Right ventricle myocardium superior (tissue), 1 donor: ENCODE measurements at regions of chr7 and their contacts with region 1.

Region 1: DNA sequence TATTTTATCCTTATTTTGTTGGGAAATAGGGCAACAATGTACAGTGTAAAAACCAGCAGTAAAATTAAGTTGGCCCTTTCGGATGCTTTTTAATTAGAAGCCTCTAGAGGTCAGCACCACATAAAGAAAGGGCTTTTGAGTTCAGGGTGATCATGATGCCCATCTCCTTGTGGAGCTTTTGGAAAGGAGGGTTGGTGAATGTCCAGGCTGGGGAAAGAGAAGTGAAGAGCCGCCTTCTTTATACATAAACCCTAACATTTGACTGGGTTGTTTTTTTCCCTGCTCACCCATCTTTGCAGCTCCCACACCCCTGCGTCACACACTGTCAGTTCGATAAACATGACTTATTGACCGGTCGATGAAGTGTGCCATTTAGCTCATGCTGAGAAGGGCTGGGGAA is 29.8 kb downstream of the MTURN start:
- DNase-seq: no peak
- ATAC-seq: peak; percentile 75

Region 2: GRCh38 chr7:30412810-30413504 is 248.4 kb after region 1 on chr7:
- intact Hi-C with region 1: loop called (anchors 2 kb)
- DNase-seq: no peak
- ATAC-seq: peak; percentile 94

Region 3: GRCh38 chr7:30564243-30564892 is 399.8 kb after region 1 on chr7:
- intact Hi-C with region 1: loop called (anchors 10 kb)
- DNase-seq: peak; percentile 80
- ATAC-seq: peak; percentile 95